ENCODE measurements at regions of chr11 and their contacts with region 1.

Region 1: DNA sequence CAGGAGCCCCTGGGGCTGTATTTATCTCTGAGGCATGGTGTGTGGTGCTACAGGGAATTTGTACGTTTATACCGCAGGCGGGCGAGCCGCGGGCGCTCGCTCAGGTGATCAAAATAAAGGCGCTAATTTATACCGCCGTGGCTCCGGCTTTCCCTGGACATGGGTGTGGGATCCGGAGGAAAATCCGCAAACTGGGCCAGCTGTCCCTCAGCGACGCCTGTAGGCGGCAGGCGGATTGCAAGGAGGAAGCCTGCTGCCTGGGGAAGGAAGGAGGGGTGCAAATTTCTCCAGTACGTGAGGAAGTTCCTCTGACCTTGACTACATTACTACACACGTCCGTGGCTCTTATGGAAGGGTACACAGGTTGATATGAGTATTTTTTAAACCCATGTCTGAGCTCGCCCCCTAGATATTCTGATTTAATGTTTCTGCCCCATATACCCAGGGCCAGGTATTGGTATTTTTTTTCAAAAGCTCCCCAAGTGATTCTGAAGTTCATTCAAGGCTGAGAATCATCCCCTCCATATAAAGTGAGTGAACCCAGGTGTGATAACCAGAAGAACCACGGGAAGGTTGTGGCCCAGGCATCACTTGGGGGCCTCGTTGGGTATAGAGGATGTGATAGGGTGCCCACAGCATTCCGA is 2.8 kb downstream of the MYOD1 start:
- DNase-seq: peak in 1 of 2 experiments; percentile 65
- H3K4me3 ChIP-seq: peak overlapping the region in 1 of 4 experiments; percentile 56; a peak in 2 of 8 replicates
- H3K27ac ChIP-seq: no peak overlapping the region
- H3K4me1 ChIP-seq: peaks cover 0 to 31% (median 14%) of the 10 kb centered on the region in 4 experiments; a peak in 6 of 7 replicates
- H3K27me3 ChIP-seq: peaks cover 52 to 72% (median 60%) of the 10 kb centered on the region in 4 experiments
- CTCF ChIP-seq: peak; percentile 76 to 90 (median 77)
- EP300 ChIP-seq: no peak
- POLR2A ChIP-seq: no peak
- RAD21 ChIP-seq: peak; percentile 62 to 72

Region 2: DNA sequence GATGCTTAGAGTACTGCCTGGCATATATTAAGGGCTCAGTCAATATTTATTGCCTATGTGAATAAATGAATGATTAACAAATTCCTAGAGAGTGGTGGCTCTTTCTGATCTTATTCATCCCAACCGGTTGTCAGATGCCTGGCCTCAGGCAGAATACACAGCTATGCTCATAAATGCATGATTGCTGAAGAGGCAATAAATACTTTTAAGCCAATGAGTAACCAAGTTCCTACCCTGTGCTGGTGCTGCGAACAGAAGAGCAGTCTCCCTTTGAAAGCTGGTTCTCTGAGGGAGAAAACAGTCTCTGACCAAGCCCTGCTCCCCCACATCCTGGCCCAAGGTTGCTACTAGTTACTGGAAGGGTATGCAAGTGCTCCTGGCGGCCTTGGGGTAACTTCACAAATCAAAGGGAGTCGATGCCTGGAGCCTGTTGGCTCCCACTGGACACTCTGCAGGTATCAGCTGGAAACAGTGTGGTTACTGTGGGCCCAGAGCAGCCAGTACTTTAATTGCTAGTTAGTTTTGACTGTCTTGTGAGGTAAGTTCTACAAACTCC is 180.7 kb before region 1 on chr11:
- CTCF ChIA-PET with region 1: no interaction called
- POLR2A ChIA-PET with region 1: no interaction called
- DNase-seq: no peak
- H3K4me3 ChIP-seq: no peak overlapping the region
- H3K27ac ChIP-seq: no peak overlapping the region
- H3K4me1 ChIP-seq: peaks cover 1 to 8% (median 3%) of the 10 kb centered on the region in 4 experiments; a peak in 6 of 7 replicates
- H3K27me3 ChIP-seq: peaks cover 0 to 17% (median 7%) of the 10 kb centered on the region in 4 experiments; a peak in 4 of 7 replicates
- CTCF ChIP-seq: no peak
- EP300 ChIP-seq: no peak
- POLR2A ChIP-seq: no peak
- RAD21 ChIP-seq: no peak

Region 3: DNA sequence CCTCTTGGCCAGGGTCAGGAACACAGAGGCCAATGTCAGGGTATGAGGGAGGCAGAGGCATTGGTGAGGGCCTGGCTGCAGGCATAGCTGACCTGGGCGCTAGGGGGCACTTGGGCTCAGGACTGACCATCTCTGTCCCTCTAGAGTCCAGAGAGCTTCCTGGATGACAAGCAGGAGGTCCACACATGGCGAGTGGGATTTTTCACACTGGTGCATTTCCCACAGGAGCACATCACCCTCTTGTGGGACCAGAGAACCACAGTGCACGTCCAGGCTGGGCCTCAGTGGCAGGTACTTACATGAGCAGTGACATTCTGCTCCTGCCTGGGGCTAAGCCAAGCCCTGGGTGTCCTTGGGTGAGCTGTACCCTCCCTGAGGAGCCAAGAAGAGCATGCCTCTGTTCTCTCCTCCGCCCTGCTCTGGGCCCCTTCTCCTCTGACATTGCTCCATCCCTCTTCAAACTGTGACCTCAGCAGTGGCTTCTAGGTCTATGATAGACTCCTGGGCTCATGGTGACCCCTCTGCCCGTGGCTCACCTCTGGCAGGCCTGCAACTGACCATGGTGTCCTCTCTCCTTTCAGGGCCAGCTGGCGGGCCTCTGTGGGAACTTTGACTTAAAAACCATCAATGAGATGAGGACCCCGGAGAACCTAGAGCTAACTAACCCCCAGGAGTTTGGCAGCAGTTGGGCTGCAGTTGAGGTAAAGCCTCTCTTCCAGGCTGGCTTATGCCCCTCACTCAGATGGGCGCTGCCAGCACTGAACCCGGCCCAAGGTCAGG is 128.5 kb before region 1 on chr11:
- CTCF ChIA-PET with region 1: interaction called, 96 read pairs
- POLR2A ChIA-PET with region 1: interaction called, 5 read pairs
- DNase-seq: peak in 1 of 2 experiments; percentile 30
- H3K4me3 ChIP-seq: no peak overlapping the region
- H3K27ac ChIP-seq: no peak overlapping the region
- H3K4me1 ChIP-seq: no peaks in the 10 kb centered on the region
- H3K27me3 ChIP-seq: no peaks in the 10 kb centered on the region; a peak in 1 of 7 replicates
- CTCF ChIP-seq: peak in 1 of 3 experiments; percentile 20; a peak in 1 of 4 replicates
- EP300 ChIP-seq: no peak
- POLR2A ChIP-seq: no peak
- RAD21 ChIP-seq: no peak

Region 4: DNA sequence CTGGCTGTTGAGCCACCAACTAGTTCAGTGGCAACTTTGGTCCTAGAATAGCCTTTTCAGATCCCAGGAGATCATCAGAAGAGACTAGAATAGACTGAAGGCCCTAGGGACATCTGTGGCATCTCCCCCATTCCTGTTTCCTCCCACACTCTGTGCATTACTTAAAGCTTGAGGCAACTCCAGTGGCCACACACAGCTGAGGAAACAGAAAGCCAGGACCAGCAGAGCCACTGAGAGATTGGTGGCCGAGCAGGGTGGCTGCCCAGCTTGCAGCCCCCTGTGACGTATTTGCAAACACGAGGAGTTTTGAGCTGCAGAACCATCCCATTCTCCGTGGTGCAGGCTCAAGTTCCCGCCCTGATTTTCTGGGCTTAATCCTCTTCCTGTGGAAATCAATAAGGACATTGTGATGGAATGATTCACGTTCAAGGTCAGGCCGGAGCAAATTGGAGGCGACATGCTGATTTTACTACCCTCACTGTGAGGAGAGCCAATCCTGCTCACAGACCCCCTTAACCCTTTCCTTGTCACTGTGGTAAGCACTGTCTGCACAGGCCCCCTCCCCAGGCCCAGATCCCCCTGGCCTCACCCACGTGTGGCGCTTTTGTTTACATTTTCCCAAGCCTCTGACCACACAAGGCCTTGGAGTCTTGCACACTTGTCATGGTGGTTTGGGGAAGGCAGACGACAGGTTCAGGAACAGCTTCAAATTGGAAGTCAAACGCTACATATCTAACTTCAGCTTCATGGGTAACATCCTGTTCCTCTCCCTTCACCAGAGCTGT is 71.8 kb before region 1 on chr11:
- CTCF ChIA-PET with region 1: interaction called, 18 read pairs
- POLR2A ChIA-PET with region 1: no interaction called
- DNase-seq: no peak
- H3K4me3 ChIP-seq: no peak overlapping the region
- H3K27ac ChIP-seq: no peak overlapping the region
- H3K4me1 ChIP-seq: peaks cover 3 to 9% (median 7%) of the 10 kb centered on the region in 4 experiments; a peak in 6 of 7 replicates
- H3K27me3 ChIP-seq: peaks cover 0 to 9% (median 3%) of the 10 kb centered on the region in 4 experiments; a peak in 3 of 7 replicates
- CTCF ChIP-seq: no peak
- EP300 ChIP-seq: no peak
- POLR2A ChIP-seq: no peak
- RAD21 ChIP-seq: no peak

Measured in H1 (cell line).